Cardiac septum (tissue), 1 donor: ENCODE measurements at regions of chr15 and their contacts with region 1.

Region 1: GRCh38 chr15:78437762-78438302 is at the start of gene IREB2:
- DNase-seq: peak; percentile 99
- total RNA-seq, gene IREB2: 28.0 TPM

Region 2: GRCh38 chr15:78149068-78149804 is 288.6 kb before region 1 on chr15 and contains the start of gene IDH3A:
- intact Hi-C with region 1: loop called (anchors 5 kb)
- DNase-seq: peak; percentile 100
- total RNA-seq, gene IDH3A: 370 TPM

Region 3: GRCh38 chr15:78299101-78299930 is 138.5 kb before region 1 on chr15 and contains the start of gene SKIC8:
- intact Hi-C with region 1: loop called (anchors 5 kb)
- DNase-seq: peak; percentile 96
- total RNA-seq, gene SKIC8: 33.3 TPM

Region 4: GRCh38 chr15:78492872-78493271 is 55.0 kb after region 1 on chr15:
- intact Hi-C with region 1: no loop called
- DNase-seq: no peak